ENCODE measurements at regions of chr20 and their contacts with region 1.

Region 1: DNA sequence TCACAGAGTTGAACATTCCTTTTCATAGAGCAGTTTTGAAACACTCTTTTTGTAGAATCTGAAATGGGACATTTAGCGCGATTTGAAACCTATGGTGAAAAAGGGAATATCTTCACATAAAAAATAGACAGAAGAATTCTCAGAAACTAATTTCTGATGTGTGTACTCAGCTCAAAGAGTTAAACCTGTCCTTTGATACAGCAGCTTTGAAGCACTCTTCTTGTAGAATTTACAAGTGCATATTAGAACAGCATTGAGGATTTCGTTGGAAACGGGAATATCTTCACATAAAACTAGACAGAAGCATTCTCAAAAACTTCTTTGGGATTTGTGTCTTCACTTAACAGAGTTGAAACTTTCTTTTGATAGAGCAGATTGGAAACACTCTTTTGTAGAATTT is 650.7 kb upstream of the ZNF337 start:
- DNase-seq: no peak
- ATAC-seq: no peak
- H3K4me3 ChIP-seq: no peak overlapping the region
- H3K4me3 Mint-ChIP-seq: no peak overlapping the region
- H3K27ac ChIP-seq: no peak overlapping the region
- H3K27ac Mint-ChIP-seq: peak overlapping the region in 2 of 9 donors; percentile 14 to 38
- H3K4me1 ChIP-seq: peaks cover 0 to 4% of the 10 kb centered on the region in 2 donors
- H3K4me1 Mint-ChIP-seq: peaks cover 0 to 97% (median 81%) of the 10 kb centered on the region in 7 donors
- H3K27me3 ChIP-seq: no peaks in the 10 kb centered on the region
- H3K27me3 Mint-ChIP-seq: no peaks in the 10 kb centered on the region

Region 2: DNA sequence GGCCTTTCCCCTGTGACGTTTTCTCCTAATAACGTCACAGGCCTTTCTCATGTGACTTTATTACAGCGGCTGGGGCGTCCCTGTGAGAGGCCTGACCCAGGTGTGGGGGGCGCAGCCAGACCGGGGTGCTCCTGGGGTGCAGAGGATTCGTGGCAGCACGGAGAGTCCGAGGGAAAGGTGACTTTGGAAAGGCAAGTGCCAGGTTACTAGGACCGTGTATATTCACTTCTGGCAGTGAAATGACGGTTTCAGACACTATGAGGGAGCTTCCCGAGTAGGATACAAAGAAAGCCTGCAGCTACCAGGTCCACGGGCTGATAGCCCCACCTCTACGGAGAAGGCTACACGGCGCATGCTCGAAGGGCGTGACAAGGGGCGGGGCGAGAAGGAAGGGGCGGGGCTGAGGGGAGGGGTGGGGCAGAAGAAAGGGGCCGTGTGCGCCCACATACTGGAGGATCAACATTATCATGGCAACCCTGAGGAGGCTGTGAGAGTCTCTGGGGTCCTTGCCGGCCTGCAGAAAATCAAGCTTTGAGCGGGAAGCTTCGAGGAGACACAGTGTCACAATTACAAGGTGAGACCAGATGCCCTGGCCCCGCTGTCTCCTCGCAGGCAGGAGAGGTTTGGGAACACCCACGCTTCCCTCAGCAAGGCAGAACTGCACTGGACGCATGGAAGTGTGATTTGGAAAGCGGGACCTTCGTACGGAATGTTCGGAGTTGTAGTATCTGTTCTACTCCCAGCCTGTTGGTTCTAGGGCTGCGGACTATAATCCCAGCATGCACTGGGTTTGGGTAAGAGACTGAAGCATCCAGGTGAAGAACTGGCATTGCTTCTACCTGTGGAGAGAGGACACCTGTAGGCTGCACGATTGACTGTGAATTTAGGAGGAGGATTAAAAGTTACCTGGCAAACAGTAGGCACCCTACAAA is 596.4 kb before region 1 on chr20:
- CTCF ChIA-PET with region 1: no interaction called
- POLR2A ChIA-PET with region 1: no interaction called
- intact Hi-C with region 1: no loop called
- DNase-seq: peak; percentile 28 to 63 (median 43)
- ATAC-seq: peak; percentile 96
- H3K4me3 ChIP-seq: peak overlapping the region; percentile 68
- H3K4me3 Mint-ChIP-seq: peak overlapping the region; percentile 83 to 93 (median 86)
- H3K27ac ChIP-seq: peak overlapping the region; percentile 59
- H3K27ac Mint-ChIP-seq: peak overlapping the region; percentile 19 to 95 (median 79)
- H3K4me1 ChIP-seq: peaks cover 0 to 4% of the 10 kb centered on the region in 2 donors
- H3K4me1 Mint-ChIP-seq: peaks cover 7 to 20% (median 14%) of the 10 kb centered on the region in 7 donors
- H3K27me3 ChIP-seq: no peaks in the 10 kb centered on the region
- H3K27me3 Mint-ChIP-seq: no peaks in the 10 kb centered on the region

Region 3: DNA sequence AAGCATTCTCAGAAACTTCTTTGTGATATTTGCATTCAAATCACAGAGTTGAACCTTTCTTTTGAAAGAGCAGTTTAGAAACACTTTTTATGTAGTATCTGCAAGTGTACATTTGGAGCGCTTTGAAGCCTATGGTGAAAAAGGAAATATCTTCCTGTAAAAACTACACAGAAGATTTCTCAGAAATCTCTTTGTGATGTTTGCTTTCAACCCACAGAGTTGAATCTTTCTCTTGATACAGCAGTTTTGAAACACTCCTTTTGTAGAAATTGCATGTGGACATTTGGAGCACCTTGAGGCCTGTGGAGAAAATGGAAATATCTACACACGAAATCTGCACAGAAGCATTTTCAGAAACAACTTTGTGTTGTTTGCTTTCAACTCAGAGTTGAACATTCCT is 38.4 kb before region 1 on chr20:
- CTCF ChIA-PET with region 1: no interaction called
- POLR2A ChIA-PET with region 1: interaction called, 4 read pairs
- intact Hi-C with region 1: loop called (anchors 5 kb)
- DNase-seq: peak in 5 of 9 donors; percentile 25 to 53 (median 38)
- ATAC-seq: peak; percentile 16
- H3K4me3 ChIP-seq: peak overlapping the region; percentile 7
- H3K4me3 Mint-ChIP-seq: peak overlapping the region; percentile 23 to 75 (median 67)
- H3K27ac ChIP-seq: no peak overlapping the region
- H3K27ac Mint-ChIP-seq: peak overlapping the region; percentile 56 to 96 (median 80)
- H3K4me1 ChIP-seq: peaks cover 0 to 48% of the 10 kb centered on the region in 2 donors
- H3K4me1 Mint-ChIP-seq: peaks cover 17 to 79% (median 74%) of the 10 kb centered on the region in 7 donors
- H3K27me3 ChIP-seq: no peaks in the 10 kb centered on the region
- H3K27me3 Mint-ChIP-seq: no peaks in the 10 kb centered on the region

Measured in naive thymus-derived CD4-positive, alpha-beta T cell (primary cell).